ENCODE measurements at regions of chr7 and their contacts with region 1.

Region 1: GRCh38 chr7:2641406-2642393 is 9.9 kb downstream of the TTYH3 start:
- DNase-seq: peak; percentile 88 to 95
- H3K4me3 ChIP-seq: peak overlapping the region; percentile 39 to 56
- H3K27ac ChIP-seq: peak overlapping the region; percentile 72 to 80
- H3K4me1 ChIP-seq: peaks cover 24 to 41% of the 10 kb centered on the region in 2 donors
- H3K27me3 ChIP-seq: no peaks in the 10 kb centered on the region
- CTCF ChIP-seq: no peak

Region 2: GRCh38 chr7:2482725-2483451 is 158.8 kb before region 1 on chr7:
- intact Hi-C with region 1: loop called (anchors 10 kb)
- DNase-seq: no peak
- H3K4me3 ChIP-seq: no peak overlapping the region
- H3K27ac ChIP-seq: no peak overlapping the region
- H3K4me1 ChIP-seq: peaks cover 12 to 20% of the 10 kb centered on the region in 2 donors
- H3K27me3 ChIP-seq: no peaks in the 10 kb centered on the region
- CTCF ChIP-seq: no peak

Region 3: DNA sequence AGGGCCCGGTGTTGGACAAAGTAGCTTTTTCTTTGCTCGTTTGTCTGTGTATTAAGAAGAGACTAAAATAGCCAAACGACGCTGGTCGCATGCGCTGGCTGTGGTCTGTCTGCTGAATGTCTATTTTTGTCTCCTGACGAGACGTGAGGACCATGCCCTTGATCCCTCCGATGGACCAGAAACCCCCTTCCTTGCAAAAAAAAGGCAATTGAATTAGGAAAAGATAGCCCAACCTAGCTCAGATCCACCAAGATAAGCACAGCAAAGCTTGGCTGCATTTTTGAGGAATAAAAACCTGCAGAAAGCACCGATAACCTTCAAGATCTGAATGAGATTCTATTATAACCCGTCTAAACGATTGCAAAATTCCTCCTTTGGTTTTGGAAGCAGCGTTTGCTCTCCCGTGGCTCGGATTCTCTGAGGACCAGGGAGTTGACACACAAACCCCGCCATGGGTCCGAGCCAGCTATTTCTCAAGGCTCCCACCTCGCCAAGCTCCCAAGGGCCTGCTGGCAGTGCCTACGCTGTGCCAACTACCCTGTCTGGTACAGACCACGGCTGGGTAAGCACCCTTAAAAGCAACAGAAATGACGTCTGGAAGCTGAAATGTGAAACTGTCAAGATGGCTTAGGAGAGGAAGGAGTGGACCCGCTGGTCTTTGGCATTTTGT is 27.6 kb before region 1 on chr7:
- intact Hi-C with region 1: loop called (anchors 1 kb)
- DNase-seq: peak; percentile 75 to 95
- H3K4me3 ChIP-seq: peak overlapping the region in 1 of 2 donors; percentile 54
- H3K27ac ChIP-seq: peak overlapping the region; percentile 66 to 95
- H3K4me1 ChIP-seq: peaks cover 17 to 40% of the 10 kb centered on the region in 2 donors
- H3K27me3 ChIP-seq: no peaks in the 10 kb centered on the region
- CTCF ChIP-seq: no peak

Region 4: DNA sequence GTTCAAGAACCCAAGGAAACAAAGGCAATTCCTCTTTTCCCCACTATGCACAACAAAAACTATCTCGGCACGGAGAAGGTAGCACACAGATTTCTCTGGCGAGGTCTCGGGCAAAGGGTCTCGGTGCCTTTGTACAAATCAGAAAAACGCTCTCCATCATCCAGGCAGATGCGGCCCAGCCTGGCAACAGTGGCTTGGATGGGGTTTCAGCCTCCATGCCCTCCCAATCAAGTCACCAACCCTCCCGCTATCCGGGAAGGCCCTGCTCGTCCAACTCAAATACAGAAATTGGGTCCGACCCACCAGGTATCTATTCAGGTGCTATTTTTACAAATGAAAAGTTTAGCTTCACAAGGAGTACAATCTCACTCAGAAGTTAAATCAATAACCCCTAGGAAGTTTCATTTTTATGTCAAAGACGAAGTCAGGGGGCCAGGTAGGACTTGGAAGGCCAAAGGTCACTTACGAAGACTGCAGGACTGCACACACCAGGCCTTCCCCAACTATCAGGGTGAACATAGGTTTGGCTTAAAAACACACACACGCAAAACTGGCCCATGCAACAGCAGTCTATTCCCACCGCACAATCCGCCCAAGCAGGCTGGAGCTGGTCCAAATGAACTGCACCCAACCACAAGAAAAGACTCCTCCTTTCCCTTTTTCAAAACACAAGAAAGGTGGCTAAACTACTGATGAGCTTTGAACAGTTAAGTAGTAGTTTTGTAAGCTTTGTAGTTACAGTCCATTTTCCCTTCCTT is 159.4 kb after region 1 on chr7:
- intact Hi-C with region 1: no loop called
- DNase-seq: no peak
- H3K4me3 ChIP-seq: peak overlapping the region in 1 of 2 donors; percentile 38
- H3K27ac ChIP-seq: peak overlapping the region; percentile 55 to 74
- H3K4me1 ChIP-seq: peaks cover 0 to 26% of the 10 kb centered on the region in 2 donors
- H3K27me3 ChIP-seq: no peaks in the 10 kb centered on the region
- CTCF ChIP-seq: no peak

Measured in ascending aorta (tissue), 2 donors.